Left cardiac atrium (tissue), 4 donors: ENCODE measurements at regions of chr7 and their contacts with region 1.

Region 1: GRCh38 chr7:23175938-23176337 is 5.9 kb upstream of the NUP42 start:
- DNase-seq: no peak
- ATAC-seq: no peak

Region 2: GRCh38 chr7:23105644-23106056 is 70.3 kb before region 1 on chr7 and contains the start of gene KLHL7:
- intact Hi-C with region 1: loop called (anchors 1 to 10 kb)
- DNase-seq: peak; percentile 97
- ATAC-seq: peak; percentile 99 to 100
- total RNA-seq, gene KLHL7: 68.3 to 81.6 TPM